Motor neuron (in vitro differentiated cells): ENCODE measurements at regions of chr11 and their contacts with region 1.

Region 1: DNA sequence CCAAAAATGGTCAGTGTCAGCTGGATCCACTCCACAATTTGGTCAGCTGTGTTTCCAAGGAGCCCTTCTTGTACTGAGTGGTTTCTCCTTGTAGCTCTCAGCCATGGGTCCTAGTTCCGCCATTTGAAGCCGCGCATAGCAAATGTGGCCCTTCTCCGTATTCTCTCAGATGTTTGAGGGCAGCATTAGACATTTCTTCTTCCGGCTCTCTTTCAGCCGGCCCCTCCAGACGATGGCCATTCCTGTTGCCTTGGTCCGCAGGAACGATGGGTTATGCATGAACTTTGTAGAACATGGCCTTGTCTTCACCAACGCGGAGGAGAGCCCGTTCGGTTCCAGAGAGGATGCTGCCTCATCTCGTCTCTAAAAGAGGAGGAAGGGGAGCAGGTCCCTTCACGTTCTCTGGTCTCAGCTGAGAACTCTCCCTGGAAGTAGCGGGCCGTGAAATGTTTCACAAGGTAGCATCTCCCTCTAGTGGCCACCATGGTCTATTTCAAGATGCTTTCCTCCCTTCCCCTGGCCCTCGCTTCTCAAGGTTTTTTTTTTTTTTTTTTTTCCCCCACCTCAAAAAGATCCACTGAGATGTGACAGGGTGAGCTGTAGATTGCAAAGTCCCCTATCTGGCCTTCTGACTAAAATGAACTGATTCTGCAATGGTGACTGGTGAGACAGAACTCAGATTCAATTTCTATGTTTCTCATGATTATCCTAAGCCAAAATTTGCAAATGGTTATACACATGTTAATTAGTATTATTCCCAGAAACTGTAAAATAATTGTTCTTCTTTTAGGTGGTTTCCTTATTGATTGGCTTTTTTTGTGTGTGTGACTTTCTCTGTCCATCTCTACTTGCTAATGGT is 19.8 kb upstream of the PLET1 start:
- ATAC-seq: peak; percentile 86 to 94 (median 90)
- H3K4me3 ChIP-seq: peak overlapping the region in 3 of 5 donors; percentile 4 to 7 (median 7)
- H3K27ac ChIP-seq: no peak overlapping the region
- H3K4me1 ChIP-seq: peaks cover 4% of the 10 kb centered on the region in 2 donors

Region 2: DNA sequence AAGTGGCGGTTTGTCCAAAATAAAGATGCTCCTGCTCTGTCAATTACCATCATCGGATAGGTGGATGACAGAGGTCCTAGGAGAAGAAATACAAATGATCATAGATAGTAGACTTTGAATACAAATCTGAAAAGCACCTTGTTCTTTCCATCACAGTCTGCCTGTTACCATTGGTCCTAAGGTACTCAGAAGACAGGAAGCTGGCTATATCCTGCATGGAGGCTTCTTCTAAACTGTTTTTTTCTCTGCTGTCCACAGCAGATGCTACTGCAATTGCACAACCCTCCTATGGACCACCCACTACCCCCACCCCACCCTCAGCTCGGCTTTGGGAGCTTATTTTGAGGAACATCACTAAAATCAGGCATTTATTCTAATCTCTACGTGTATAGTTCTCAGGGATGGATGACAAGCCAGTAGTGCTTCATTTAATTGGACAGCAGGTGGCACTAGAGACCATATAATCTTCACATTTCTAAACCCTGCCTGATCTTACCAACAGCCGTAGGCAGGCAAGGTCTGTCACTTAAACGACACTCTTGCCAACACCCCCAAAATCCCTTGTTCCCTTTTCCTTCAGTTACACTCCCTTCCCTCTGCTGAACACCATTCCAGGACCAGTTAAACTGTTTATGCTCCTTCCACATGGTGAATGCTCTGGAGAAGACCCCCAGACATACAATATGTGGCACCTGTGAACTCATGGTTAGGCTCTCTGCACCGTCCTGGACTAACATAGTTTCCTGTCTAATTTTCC is 60.8 kb before region 1 on chr11:
- in situ Hi-C with region 1: loop called in 1 of 9 experiments (anchors 5 kb)
- ATAC-seq: peak; percentile 96 to 100 (median 99)
- H3K4me3 ChIP-seq: no peak overlapping the region
- H3K27ac ChIP-seq: no peak overlapping the region
- H3K4me1 ChIP-seq: no peaks in the 10 kb centered on the region

Region 3: DNA sequence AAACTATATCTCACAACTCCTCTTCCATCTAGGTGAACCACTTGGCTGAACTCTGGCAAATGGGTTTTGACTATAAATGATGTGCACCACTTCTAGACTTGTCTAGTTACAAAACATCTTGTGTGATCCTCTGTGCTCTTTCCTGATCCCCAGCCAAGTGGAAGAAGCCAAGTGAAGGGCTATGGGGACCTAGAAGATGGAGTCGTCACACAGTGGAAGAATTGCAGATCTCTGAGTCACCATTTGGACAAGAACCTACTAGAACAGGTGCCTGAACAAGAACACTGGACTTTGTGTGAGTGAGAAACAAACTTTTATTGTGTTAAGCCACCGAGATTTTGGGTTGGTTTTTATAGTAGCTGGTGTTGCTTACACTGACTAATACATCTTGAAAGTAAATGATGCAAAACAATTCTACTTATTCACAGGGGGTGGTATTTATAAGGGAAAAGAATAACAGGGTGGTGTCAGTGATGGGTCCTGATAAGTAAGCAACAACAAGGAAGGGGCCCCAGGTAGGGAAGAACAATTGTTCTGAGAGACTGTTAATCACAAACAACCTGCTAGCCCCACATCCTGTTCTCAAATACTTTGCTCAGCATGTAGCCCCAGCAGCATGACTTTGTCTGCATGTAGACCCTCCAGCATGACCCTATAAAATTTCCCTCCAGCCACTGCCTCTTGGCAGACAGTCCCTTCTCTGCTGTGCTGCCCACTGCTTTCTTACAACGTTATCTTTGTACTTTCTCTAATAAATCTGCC is 260.8 kb after region 1 on chr11:
- in situ Hi-C with region 1: no loop called
- ATAC-seq: no peak
- H3K4me3 ChIP-seq: no peak overlapping the region
- H3K27ac ChIP-seq: no peak overlapping the region
- H3K4me1 ChIP-seq: peaks cover 0 to 7% of the 10 kb centered on the region in 2 donors

Region 4: GRCh38 chr11:112555491-112556364 is 275.2 kb after region 1 on chr11:
- in situ Hi-C with region 1: loop called in 2 of 9 experiments (anchors 25 kb)
- ATAC-seq: peak in 7 of 8 experiments; percentile 49 to 89 (median 74)
- H3K4me3 ChIP-seq: no peak overlapping the region
- H3K27ac ChIP-seq: no peak overlapping the region
- H3K4me1 ChIP-seq: peaks cover 15 to 31% of the 10 kb centered on the region in 2 donors

Region 5: GRCh38 chr11:112588252-112588694 is 307.8 kb after region 1 on chr11:
- in situ Hi-C with region 1: loop called in 2 of 9 experiments (anchors 25 kb)
- ATAC-seq: peak; percentile 87 to 98 (median 95)
- H3K4me3 ChIP-seq: no peak overlapping the region
- H3K27ac ChIP-seq: peak overlapping the region; percentile 31 to 47
- H3K4me1 ChIP-seq: peaks cover 37 to 43% of the 10 kb centered on the region in 2 donors